ENCODE measurements at regions of chr3 and their contacts with region 1.

Region 1: GRCh38 chr3:112966633-112967032 is 8.3 kb downstream of the CD200R1 start:
- DNase-seq: no peak
- ATAC-seq: no peak
- H3K4me3 ChIP-seq: no peak overlapping the region
- H3K27ac ChIP-seq: no peak overlapping the region
- H3K4me1 ChIP-seq: peaks cover 4% of the 10 kb centered on the region; the same call in 1 of the 3 replicates
- CTCF ChIP-seq: no peak
- EP300 ChIP-seq: no peak
- POLR2A ChIP-seq: no peak
- RAD21 ChIP-seq: no peak

Region 2: DNA sequence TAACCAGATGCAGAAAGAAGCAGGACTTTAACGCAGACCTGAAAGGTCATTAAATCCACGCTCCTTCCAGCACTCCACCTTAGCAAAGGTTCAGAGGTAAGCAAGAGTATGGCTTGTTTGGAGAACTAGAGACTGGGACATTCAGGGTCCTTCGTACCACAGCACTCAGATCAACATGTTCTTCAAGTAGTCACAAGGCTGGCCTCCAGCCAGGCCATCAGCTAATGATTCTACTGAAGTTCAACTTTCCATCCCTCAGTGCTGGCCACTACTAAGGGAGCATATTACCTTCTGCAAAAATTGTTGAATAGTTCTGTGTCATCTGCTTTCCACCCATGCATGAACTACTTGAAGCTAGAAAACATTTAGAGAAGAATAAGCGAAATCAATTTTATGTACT is 137.6 kb before region 1 on chr3:
- CTCF ChIA-PET with region 1: no interaction called
- POLR2A ChIA-PET with region 1: no interaction called
- DNase-seq: no peak
- ATAC-seq: no peak
- H3K4me3 ChIP-seq: no peak overlapping the region
- H3K27ac ChIP-seq: no peak overlapping the region
- H3K4me1 ChIP-seq: no peaks in the 10 kb centered on the region
- CTCF ChIP-seq: no peak
- EP300 ChIP-seq: no peak
- POLR2A ChIP-seq: no peak
- RAD21 ChIP-seq: no peak

Region 3: DNA sequence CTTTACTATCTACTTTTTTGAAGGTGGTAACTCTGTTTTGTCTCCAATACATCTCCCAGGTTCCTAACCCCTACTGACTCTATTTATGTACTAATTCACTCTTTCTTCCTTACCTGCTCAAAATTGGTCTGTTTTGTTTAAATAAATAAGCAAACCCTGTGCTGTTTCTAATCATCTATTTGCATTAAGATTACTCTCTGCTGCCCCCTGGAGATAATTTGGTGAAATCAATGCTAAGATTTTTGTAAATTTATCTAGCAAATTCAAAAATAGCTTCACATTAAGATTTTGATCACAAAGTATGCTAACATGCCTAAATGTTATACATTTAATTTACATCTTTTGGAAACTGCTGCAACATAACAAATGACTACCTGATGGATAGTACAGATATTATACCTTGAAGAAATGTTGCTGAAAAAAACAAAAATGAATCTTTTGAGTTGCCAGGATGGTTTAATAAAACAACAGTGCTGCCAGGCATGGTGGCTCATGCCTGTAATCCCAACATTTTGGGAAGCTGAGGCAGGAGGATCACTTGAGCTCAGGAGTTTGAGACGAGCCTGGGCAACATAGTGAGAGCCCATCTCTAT is 12.7 kb after region 1 on chr3:
- CTCF ChIA-PET with region 1: interaction called, 27 read pairs
- POLR2A ChIA-PET with region 1: no interaction called
- DNase-seq: peak; percentile 21 to 42
- ATAC-seq: no peak
- H3K4me3 ChIP-seq: no peak overlapping the region
- H3K27ac ChIP-seq: peak overlapping the region; percentile 2 to 25; a peak in 3 of 6 replicates
- H3K4me1 ChIP-seq: peaks cover 8% of the 10 kb centered on the region; the same call in 1 of the 3 replicates
- CTCF ChIP-seq: peak; percentile 83
- EP300 ChIP-seq: no peak
- POLR2A ChIP-seq: no peak
- RAD21 ChIP-seq: peak; percentile 74 to 83

Region 4: GRCh38 chr3:112990672-112991602 is 24.3 kb after region 1 on chr3 and contains the start of gene GTPBP8:
- CTCF ChIA-PET with region 1: no interaction called
- POLR2A ChIA-PET with region 1: no interaction called
- DNase-seq: peak; percentile 84 to 95
- ATAC-seq: peak; percentile 98 to 99
- H3K4me3 ChIP-seq: peak within 1 kb of the TSS; percentile 88
- H3K27ac ChIP-seq: peak within 1 kb of the TSS; percentile 90 to 94
- H3K4me1 ChIP-seq: peaks cover 18% of the 10 kb centered on the region
- CTCF ChIP-seq: no peak
- EP300 ChIP-seq: no peak
- POLR2A ChIP-seq: peak; percentile 61
- RAD21 ChIP-seq: peak; percentile 2 to 27; a peak in 1 of 5 replicates
- polyA plus RNA-seq, gene GTPBP8: 25.9 and 26.6 TPM in 2 replicates

Measured in A549 (cell line).